ENCODE measurements at regions of chr20 and their contacts with region 1.

Region 1: GRCh38 chr20:2991532-2991931 is 51.9 kb upstream of the GNRH2 start:
- DNase-seq: no peak
- H3K4me3 ChIP-seq: no peak overlapping the region
- H3K27ac ChIP-seq: no peak overlapping the region
- H3K4me1 ChIP-seq: no peaks in the 10 kb centered on the region
- H3K27me3 ChIP-seq: no peaks in the 10 kb centered on the region
- CTCF ChIP-seq: no peak
- POLR2A ChIP-seq: no peak

Region 2: DNA sequence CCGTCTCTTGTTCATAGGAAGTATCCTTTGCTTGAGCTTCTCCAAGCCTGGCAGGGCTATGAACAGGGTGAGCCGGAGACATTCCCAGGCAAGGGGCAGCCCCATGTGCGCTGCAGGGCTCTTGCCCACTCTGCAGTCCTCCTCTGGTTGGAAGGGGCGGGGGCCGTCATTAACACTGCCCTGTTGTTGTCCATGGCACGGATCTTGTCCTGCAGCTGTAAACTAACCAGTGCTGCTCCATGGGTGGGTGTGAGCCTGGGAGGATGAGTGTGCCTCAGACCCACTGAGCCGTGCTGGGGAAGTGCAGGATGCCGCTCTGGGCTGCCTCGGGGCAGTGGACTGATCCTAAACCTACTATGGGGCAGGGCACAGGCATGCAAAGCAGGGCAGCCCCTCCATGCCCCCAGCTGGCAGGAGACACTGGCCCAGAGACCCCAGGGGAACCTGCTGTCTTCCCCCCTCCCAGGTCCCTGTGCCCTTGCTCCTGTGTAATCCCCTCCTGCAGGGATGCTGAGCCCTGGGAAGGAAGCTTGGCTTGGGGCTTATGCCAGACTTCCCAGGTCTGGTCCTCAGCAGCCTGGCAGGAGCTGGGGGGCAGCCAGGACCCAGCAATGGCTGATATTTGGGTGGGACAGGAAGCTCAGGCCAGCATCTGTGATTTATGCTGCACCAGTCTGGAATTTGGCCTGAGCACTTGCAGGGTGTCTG is 290.5 kb before region 1 on chr20:
- intact Hi-C with region 1: loop called (anchors 10 kb)
- DNase-seq: no peak
- H3K4me3 ChIP-seq: no peak overlapping the region
- H3K27ac ChIP-seq: no peak overlapping the region
- H3K4me1 ChIP-seq: no peaks in the 10 kb centered on the region
- H3K27me3 ChIP-seq: no peaks in the 10 kb centered on the region
- CTCF ChIP-seq: no peak
- POLR2A ChIP-seq: no peak

Region 3: GRCh38 chr20:2795451-2795850 is 196.1 kb before region 1 on chr20:
- intact Hi-C with region 1: no loop called
- DNase-seq: no peak
- H3K4me3 ChIP-seq: no peak overlapping the region
- H3K27ac ChIP-seq: no peak overlapping the region
- H3K4me1 ChIP-seq: peaks cover 3 to 7% of the 10 kb centered on the region in 2 donors
- H3K27me3 ChIP-seq: no peaks in the 10 kb centered on the region
- CTCF ChIP-seq: no peak
- POLR2A ChIP-seq: no peak

Region 4: DNA sequence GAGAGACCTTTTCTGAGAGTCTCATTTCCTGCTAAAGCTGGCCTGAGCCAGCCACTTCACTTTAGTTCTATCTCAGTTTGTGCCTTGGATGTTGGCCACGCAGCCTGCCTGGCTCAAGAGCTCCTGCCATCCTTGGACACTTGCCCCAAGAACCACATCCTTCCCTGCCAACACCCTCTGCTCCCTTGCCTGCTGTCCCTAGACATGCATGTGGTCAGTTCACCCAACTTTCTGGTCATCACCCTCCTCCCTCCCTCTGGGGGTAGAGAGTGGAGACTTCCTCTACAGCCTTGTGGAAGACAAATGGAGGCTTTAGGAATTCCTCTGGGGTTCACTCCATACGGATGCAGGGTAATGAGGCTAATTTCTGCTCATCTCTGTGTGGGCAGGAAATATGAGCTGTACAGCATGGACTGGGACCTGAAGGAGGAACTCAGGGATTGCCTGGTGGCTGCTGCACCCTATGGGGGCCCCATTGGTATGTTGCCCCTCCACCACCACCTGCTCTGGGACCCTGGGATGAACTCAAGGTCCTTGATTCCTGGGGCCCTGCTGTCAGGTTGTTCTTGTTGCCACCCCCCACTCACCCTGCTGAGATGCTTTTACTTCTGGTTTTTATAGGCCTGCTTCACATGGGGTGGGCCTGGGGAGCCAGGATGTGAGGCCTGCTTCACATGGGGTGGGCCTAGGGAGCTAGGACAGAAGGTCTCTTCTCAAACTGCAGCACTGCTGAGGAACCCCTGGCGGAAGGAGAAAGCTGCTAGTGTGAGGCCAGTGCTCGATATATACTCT is 132.0 kb before region 1 on chr20:
- intact Hi-C with region 1: loop called (anchors 5 kb)
- DNase-seq: peak; percentile 72 to 74
- H3K4me3 ChIP-seq: no peak overlapping the region
- H3K27ac ChIP-seq: no peak overlapping the region
- H3K4me1 ChIP-seq: peaks cover 5 to 18% of the 10 kb centered on the region in 2 donors
- H3K27me3 ChIP-seq: no peaks in the 10 kb centered on the region
- CTCF ChIP-seq: no peak
- POLR2A ChIP-seq: no peak

Region 5: DNA sequence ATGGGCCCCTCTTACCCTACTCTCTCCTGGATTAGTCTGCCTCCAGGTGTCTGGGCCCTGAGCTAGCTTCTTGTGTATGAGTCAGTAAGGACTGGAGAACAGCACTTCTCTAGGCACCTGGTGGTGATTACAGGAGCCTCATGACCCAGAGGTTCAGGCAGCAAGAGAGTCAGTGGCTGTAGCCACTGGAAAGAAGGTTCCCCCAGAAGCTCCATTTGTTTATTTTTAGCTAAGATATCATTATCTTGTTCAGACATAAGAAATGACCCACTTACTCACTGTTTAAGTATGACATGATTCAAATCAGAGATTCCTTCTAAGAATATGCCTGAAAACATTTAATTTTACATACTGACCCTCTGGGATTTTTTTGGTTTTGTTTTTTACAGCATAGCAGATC is 271.0 kb after region 1 on chr20:
- intact Hi-C with region 1: no loop called
- DNase-seq: no peak
- H3K4me3 ChIP-seq: no peak overlapping the region
- H3K27ac ChIP-seq: no peak overlapping the region
- H3K4me1 ChIP-seq: no peaks in the 10 kb centered on the region
- H3K27me3 ChIP-seq: no peaks in the 10 kb centered on the region
- CTCF ChIP-seq: no peak
- POLR2A ChIP-seq: no peak